ENCODE measurements at regions of chr18 and their contacts with region 1.

Region 1: GRCh38 chr18:45839414-45840395 is 14.2 kb downstream of the SIGLEC15 start:
- DNase-seq: no peak
- ATAC-seq: peak; percentile 51 to 82 (median 76)
- H3K4me3 ChIP-seq: no peak overlapping the region
- H3K27ac ChIP-seq: no peak overlapping the region
- H3K4me1 ChIP-seq: peaks cover 5 to 24% (median 20%) of the 10 kb centered on the region in 9 donors
- H3K27me3 ChIP-seq: peaks cover 17 to 50% (median 33%) of the 10 kb centered on the region in 7 donors
- CTCF ChIP-seq: peak; percentile 28 to 70 (median 61)

Region 2: DNA sequence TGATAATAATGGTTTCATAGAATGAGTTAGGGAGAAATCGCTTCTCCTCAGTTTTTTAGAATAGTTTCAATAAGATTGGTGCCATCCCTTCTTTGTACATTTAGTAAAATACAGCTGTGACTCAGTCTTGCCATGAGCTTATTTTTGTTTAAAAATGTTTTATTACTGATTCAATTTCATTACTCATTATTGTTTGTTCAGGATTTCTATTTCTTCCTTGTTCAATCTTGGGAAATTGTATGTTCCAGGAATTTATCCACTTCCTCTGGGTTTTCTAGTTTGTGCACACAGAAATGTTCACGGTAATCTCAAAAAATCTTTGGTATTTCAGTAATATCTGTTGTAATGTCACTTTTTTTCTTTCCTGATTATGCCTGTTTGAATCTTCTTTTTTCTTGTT is 1530.5 kb before region 1 on chr18:
- intact Hi-C with region 1: no loop called
- DNase-seq: no peak
- ATAC-seq: no peak
- H3K4me3 ChIP-seq: no peak overlapping the region
- H3K27ac ChIP-seq: no peak overlapping the region
- H3K4me1 ChIP-seq: no peaks in the 10 kb centered on the region
- H3K27me3 ChIP-seq: no peaks in the 10 kb centered on the region
- CTCF ChIP-seq: no peak

Region 3: GRCh38 chr18:45690975-45691815 is 148.5 kb before region 1 on chr18:
- intact Hi-C with region 1: loop called in 7 of 10 experiments (anchors 1 to 10 kb)
- DNase-seq: peak; percentile 73 to 78
- ATAC-seq: peak; percentile 68 to 90 (median 86)
- H3K4me3 ChIP-seq: no peak overlapping the region
- H3K27ac ChIP-seq: no peak overlapping the region
- H3K4me1 ChIP-seq: peaks cover 0 to 22% (median 0%) of the 10 kb centered on the region in 9 donors
- H3K27me3 ChIP-seq: peaks cover 0 to 10% (median 3%) of the 10 kb centered on the region in 7 donors
- CTCF ChIP-seq: peak; percentile 67 to 92 (median 83)

Region 4: GRCh38 chr18:45715341-45715740 is 124.4 kb before region 1 on chr18:
- intact Hi-C with region 1: loop called in 6 of 10 experiments (anchors 5 to 10 kb)
- DNase-seq: no peak
- ATAC-seq: no peak
- H3K4me3 ChIP-seq: no peak overlapping the region
- H3K27ac ChIP-seq: no peak overlapping the region
- H3K4me1 ChIP-seq: no peaks in the 10 kb centered on the region
- H3K27me3 ChIP-seq: peaks cover 0 to 3% (median 0%) of the 10 kb centered on the region in 7 donors
- CTCF ChIP-seq: no peak

Region 5: GRCh38 chr18:45722899-45723298 is 116.8 kb before region 1 on chr18:
- intact Hi-C with region 1: loop called (anchors 2 to 10 kb)
- DNase-seq: peak; percentile 71 to 79
- ATAC-seq: peak in 7 of 8 donors; percentile 68 to 87 (median 80)
- H3K4me3 ChIP-seq: no peak overlapping the region
- H3K27ac ChIP-seq: no peak overlapping the region
- H3K4me1 ChIP-seq: peaks cover 0 to 5% (median 0%) of the 10 kb centered on the region in 9 donors
- H3K27me3 ChIP-seq: peaks cover 0 to 18% (median 4%) of the 10 kb centered on the region in 7 donors
- CTCF ChIP-seq: peak; percentile 42 to 86 (median 75)

Region 6: GRCh38 chr18:45738658-45739057 is 101.0 kb before region 1 on chr18:
- intact Hi-C with region 1: loop called in 1 of 10 experiments (anchors 5 kb)
- DNase-seq: no peak
- ATAC-seq: peak in 1 of 8 donors; percentile 30
- H3K4me3 ChIP-seq: no peak overlapping the region
- H3K27ac ChIP-seq: peak overlapping the region in 3 of 10 donors; percentile 19 to 89 (median 22)
- H3K4me1 ChIP-seq: peaks cover 0 to 32% (median 6%) of the 10 kb centered on the region in 9 donors
- H3K27me3 ChIP-seq: no peaks in the 10 kb centered on the region
- CTCF ChIP-seq: peak in 3 of 9 donors; percentile 6 to 19 (median 14)

Region 7: GRCh38 chr18:45775241-45775676 is 64.4 kb before region 1 on chr18:
- intact Hi-C with region 1: loop called in 1 of 10 experiments (anchors 10 kb)
- DNase-seq: peak; percentile 78 to 84
- ATAC-seq: peak; percentile 88 to 96 (median 94)
- H3K4me3 ChIP-seq: peak overlapping the region; percentile 18 to 81 (median 71)
- H3K27ac ChIP-seq: peak overlapping the region; percentile 8 to 95 (median 82)
- H3K4me1 ChIP-seq: peaks cover 0 to 27% (median 9%) of the 10 kb centered on the region in 9 donors
- H3K27me3 ChIP-seq: peaks cover 0 to 10% (median 0%) of the 10 kb centered on the region in 7 donors
- CTCF ChIP-seq: no peak

Region 8: GRCh38 chr18:45786649-45787340 is 52.9 kb before region 1 on chr18:
- intact Hi-C with region 1: no loop called
- DNase-seq: no peak
- ATAC-seq: no peak
- H3K4me3 ChIP-seq: no peak overlapping the region
- H3K27ac ChIP-seq: no peak overlapping the region
- H3K4me1 ChIP-seq: peaks cover 0 to 9% (median 4%) of the 10 kb centered on the region in 9 donors
- H3K27me3 ChIP-seq: peaks cover 0 to 6% (median 0%) of the 10 kb centered on the region in 7 donors
- CTCF ChIP-seq: no peak